RWPE1 (cell line): ENCODE measurements at regions of chr17 and their contacts with region 1.

Region 1: GRCh38 chr17:62653002-62653825 is 25.7 kb downstream of the MRC2 start:
- DNase-seq: no peak
- H3K27ac ChIP-seq: peak overlapping the region; percentile 44
- CTCF ChIP-seq: no peak

Region 2: DNA sequence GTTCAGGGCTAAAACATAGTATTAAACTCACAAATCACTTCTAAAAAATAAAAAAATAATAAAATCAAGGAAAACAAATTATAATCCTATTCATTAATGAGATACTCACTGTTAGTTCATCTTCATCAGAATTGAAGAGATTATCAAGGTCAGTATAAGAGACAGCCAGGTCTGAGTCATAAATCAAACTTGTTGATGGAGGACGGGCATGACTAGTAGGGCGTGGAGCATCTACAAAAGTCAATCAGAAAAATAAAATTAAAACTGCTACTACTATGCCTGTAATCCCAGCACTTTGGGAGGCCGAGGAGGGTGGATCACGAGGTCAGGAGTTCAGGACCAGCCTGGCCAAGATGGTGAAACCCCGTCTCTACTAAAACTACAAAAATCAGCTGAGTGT is 666.3 kb before region 1 on chr17:
- CTCF ChIA-PET with region 1: interaction called, 10 read pairs
- POLR2A ChIA-PET with region 1: no interaction called
- DNase-seq: peak; percentile 16
- H3K27ac ChIP-seq: peak overlapping the region; percentile 32; the same call in 1 of the 2 replicates
- CTCF ChIP-seq: no peak